Activated T-helper 2 cell treated with anti-CD3 and anti-CD28 coated beads, Interferon-gamma antibody, Interleukin-2, Interleukin-4, amounts not matched to agents 10 μg/mL and 5 μg/mL and 100 μg/mL, durations not matched to agents 14 hours and 24 hours and 36 hours (primary cell): ENCODE measurements at regions of chr7 and their contacts with region 1.

Region 1: DNA sequence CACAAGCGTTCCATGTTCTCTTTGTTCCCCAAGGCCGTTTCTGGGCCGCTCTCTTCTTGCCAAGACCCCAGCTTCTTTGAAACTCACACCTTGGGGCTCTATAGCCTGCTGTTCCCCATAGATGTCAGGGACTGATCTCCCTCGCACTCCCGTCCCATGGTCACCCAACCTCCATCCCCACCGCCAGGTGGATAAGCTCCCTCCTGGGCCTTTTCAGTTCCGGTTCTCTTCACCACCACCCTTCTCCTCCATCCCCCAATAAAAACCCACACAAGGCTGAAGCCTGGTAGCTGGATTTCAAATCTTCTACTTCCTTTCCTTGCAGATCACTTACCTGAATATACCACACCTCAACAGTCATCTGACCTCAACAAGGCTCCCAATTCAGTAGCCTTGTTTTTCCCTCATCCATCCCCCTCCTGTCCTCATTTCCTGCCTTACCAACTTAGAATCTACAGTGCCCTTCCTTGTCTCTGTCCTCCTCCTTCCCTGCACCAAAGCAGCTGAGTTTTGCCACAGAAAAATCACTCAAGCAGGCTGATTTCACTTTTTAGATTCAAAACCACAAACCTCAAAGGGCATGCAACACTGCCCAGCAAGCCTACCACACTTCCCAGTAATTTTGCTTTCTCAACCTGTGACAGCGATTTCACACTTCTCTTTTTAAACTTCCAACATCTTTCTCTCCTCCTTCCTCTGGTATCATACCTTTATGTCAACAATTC is 7.7 kb downstream of the SLC37A3 start:
- DNase-seq: no peak
- H3K4me3 Mint-ChIP-seq: no peak overlapping the region
- H3K27ac Mint-ChIP-seq: no peak overlapping the region
- H3K4me1 Mint-ChIP-seq: peaks cover 5% of the 10 kb centered on the region
- H3K27me3 Mint-ChIP-seq: no peaks in the 10 kb centered on the region

Region 2: DNA sequence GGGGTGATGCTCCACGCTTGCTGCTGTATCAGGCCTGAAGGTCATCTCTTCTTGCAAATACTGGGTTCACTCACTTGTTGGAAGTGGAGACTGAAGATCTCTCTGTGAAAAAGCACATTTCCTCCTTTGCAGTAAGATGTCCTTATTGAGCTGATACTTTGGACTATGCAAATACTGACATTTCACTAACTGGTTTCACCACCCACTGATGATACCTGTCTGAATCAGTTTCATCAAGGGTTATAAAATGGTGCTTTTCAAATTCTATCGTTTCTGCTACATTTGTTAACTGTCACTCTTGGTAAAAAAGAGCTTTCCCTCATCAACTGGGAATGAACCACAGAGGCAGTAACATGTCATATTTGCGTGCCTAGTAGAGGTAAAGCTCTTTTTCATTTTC is 48.7 kb after region 1 on chr7:
- intact Hi-C with region 1: no loop called
- DNase-seq: no peak
- H3K4me3 Mint-ChIP-seq: no peak overlapping the region
- H3K27ac Mint-ChIP-seq: peak overlapping the region; percentile 58
- H3K4me1 Mint-ChIP-seq: peaks cover 9% of the 10 kb centered on the region
- H3K27me3 Mint-ChIP-seq: no peaks in the 10 kb centered on the region

Region 3: DNA sequence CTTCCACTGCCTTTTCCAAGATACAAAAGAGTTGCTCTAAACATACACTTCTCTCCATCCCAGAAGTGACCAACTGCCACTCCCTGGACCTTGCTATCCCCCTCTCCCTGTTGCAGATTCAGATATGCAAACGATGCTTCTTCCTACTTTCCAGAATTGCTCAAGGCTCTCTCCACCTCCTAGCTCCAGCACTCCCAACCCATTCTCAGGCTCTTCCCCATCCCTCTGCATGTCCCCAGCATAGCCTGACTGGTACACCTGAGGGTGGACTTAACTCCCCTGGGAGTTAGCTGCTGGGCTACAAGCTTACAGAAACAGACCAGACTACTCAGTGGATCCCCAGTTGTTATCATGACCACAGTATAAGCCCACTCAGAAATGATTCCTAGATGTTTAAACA is 61.1 kb after region 1 on chr7:
- intact Hi-C with region 1: loop called (anchors 2 kb)
- DNase-seq: no peak
- H3K4me3 Mint-ChIP-seq: no peak overlapping the region
- H3K27ac Mint-ChIP-seq: peak overlapping the region; percentile 68
- H3K4me1 Mint-ChIP-seq: peaks cover 83% of the 10 kb centered on the region
- H3K27me3 Mint-ChIP-seq: no peaks in the 10 kb centered on the region